ENCODE measurements at regions of chr22 and their contacts with region 1.

Region 1: DNA sequence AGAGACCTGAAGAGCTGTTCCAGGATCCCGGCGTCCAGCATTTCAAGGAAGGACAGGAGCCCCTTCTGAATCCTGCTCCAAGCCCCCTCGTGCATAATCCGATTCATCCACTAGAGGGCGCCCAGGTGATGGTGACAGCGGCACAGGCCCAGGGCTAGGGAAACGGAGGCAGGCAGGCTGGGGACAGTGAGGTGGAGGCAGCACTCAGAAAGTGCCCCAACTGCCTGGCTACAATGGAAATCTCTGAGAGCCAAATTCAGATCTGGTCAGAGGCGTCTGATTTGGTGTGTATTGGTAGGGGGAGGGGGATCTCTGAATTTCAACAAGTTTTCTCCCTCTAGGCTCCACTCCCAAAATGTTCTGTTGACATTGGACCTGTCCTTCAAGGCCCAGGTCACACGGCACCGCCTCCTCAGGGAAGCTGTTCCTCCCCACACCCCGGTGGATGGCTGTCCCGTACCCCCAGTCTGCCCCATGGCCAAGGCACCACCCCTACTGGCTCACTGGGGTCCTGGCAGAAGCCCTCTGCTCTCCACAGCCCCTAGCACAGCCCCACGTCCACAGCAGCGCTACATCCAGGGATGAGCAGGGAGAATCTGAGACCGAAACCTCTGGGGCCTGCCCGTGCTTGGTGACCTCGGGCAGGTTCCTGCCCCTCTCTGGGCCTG is 142.9 kb downstream of the CRYBB2 start:
- DNase-seq: peak in 1 of 2 experiments; percentile 98
- H3K4me3 ChIP-seq: no peak overlapping the region
- H3K27ac ChIP-seq: no peak overlapping the region
- H3K4me1 ChIP-seq: no peaks in the 10 kb centered on the region
- H3K27me3 ChIP-seq: no peaks in the 10 kb centered on the region
- CTCF ChIP-seq: peak; percentile 91 to 97 (median 96)
- EP300 ChIP-seq: no peak
- POLR2A ChIP-seq: no peak
- RAD21 ChIP-seq: peak; percentile 91 to 93

Region 2: DNA sequence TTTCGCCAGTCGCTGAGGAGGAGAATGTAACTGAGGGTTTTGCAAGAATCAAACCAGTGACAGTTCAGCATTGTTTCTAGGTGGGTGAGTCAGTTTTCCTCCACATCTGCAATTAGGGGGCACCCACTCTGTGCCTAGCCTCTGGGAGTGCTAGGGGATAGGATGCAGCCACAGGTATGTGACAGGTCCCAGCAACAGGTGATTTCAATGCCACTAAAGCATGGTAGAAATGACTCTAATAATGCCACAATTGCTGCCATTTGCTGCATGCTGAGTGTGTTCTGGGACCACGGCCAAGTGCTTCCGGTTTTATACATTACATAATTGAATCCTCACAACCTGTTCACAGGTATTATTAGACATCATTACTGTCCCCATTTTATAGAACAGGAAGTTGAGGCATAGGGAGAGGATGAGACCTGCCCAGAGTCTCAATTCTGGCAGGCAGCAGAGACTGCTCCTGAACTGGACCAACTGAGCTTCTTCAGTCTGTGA is 142.4 kb before region 1 on chr22:
- CTCF ChIA-PET with region 1: no interaction called
- POLR2A ChIA-PET with region 1: no interaction called
- DNase-seq: no peak
- H3K4me3 ChIP-seq: no peak overlapping the region
- H3K27ac ChIP-seq: no peak overlapping the region
- H3K4me1 ChIP-seq: no peaks in the 10 kb centered on the region
- H3K27me3 ChIP-seq: peaks cover 0 to 4% (median 0%) of the 10 kb centered on the region in 4 experiments; a peak in 2 of 7 replicates
- CTCF ChIP-seq: no peak
- EP300 ChIP-seq: no peak
- POLR2A ChIP-seq: no peak
- RAD21 ChIP-seq: no peak

Region 3: DNA sequence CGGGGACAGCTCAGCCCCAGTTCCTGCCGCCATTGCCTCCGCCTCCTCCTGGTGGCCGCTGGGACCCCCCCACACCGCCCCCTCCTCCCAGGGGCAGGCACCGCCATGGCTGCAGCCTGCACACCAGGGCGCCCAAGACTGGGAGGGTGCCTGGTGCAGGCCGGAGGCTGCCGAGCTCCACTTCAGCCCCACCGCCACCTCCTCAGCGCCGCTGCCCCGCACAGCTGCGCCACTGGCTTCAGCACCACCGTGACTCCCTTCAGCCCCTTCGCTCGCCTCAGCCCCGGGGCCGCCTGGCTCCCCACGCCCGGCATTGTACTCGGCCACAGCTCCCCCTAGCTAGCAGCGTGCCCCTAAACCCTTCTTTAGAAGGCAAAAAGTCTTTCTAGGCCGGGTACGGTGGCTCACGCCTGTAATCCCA is 11.8 kb before region 1 on chr22:
- CTCF ChIA-PET with region 1: interaction called, 13 read pairs
- POLR2A ChIA-PET with region 1: no interaction called
- DNase-seq: no peak
- H3K4me3 ChIP-seq: no peak overlapping the region
- H3K27ac ChIP-seq: no peak overlapping the region
- H3K4me1 ChIP-seq: no peaks in the 10 kb centered on the region
- H3K27me3 ChIP-seq: no peaks in the 10 kb centered on the region
- CTCF ChIP-seq: peak; percentile 17 to 25 (median 24)
- EP300 ChIP-seq: no peak
- POLR2A ChIP-seq: no peak
- RAD21 ChIP-seq: peak in 1 of 2 experiments; percentile 29; a peak in 2 of 4 replicates

Region 4: DNA sequence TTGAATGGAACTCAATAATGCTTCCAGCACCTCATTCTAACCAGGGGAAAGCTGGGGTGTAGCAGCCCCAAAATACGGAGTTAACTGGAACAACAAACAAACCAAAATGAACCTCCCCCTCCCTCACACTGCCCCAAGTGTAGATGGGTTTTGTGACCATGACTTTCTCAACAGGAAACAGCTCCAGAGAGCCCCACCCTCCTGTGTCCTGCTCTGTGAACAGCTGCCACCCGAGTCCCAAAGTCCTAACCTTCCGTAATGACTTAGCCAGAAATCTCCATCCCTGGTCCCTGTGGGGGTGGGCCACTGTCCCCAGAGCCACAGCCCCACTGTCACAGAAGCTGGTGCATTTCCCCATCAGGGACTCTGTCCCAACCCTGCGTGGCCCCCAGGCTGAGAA is 12.5 kb after region 1 on chr22:
- CTCF ChIA-PET with region 1: interaction called, 11 read pairs
- POLR2A ChIA-PET with region 1: interaction called, 3 read pairs
- DNase-seq: no peak
- H3K4me3 ChIP-seq: no peak overlapping the region
- H3K27ac ChIP-seq: no peak overlapping the region
- H3K4me1 ChIP-seq: no peaks in the 10 kb centered on the region
- H3K27me3 ChIP-seq: no peaks in the 10 kb centered on the region
- CTCF ChIP-seq: no peak
- EP300 ChIP-seq: no peak
- POLR2A ChIP-seq: no peak
- RAD21 ChIP-seq: no peak

Region 5: DNA sequence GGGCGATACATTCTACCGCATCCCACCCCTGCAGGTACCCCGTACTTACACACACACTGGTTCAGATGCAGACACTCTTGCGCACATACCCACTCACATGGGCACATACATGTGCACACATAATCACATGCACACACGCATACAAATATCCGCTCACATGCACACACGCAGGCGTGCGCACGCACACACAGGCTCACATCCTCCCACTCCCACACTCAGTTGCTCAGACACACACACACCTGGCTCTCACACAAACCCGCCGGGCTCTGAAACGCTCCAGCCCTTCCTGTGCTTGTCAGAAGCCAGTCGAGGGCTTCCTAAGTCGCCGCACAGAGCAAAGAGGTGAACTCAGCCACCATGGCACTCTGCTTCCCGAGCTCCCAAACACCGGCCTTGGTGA is 21.5 kb after region 1 on chr22:
- CTCF ChIA-PET with region 1: interaction called, 12 read pairs
- POLR2A ChIA-PET with region 1: interaction called, 4 read pairs
- DNase-seq: no peak
- H3K4me3 ChIP-seq: no peak overlapping the region
- H3K27ac ChIP-seq: no peak overlapping the region
- H3K4me1 ChIP-seq: peaks cover 14 to 44% (median 35%) of the 10 kb centered on the region in 4 experiments
- H3K27me3 ChIP-seq: no peaks in the 10 kb centered on the region
- CTCF ChIP-seq: no peak
- EP300 ChIP-seq: no peak
- POLR2A ChIP-seq: no peak
- RAD21 ChIP-seq: no peak

Region 6: GRCh38 chr22:25388866-25389540 is 26.7 kb after region 1 on chr22:
- CTCF ChIA-PET with region 1: interaction called, 12 read pairs
- POLR2A ChIA-PET with region 1: interaction called, 3 read pairs
- DNase-seq: peak in 1 of 2 experiments; percentile 44
- H3K4me3 ChIP-seq: no peak overlapping the region
- H3K27ac ChIP-seq: no peak overlapping the region
- H3K4me1 ChIP-seq: peaks cover 11 to 46% (median 31%) of the 10 kb centered on the region in 4 experiments
- H3K27me3 ChIP-seq: no peaks in the 10 kb centered on the region
- CTCF ChIP-seq: no peak
- EP300 ChIP-seq: no peak
- POLR2A ChIP-seq: no peak
- RAD21 ChIP-seq: no peak